CD4-positive, alpha-beta T cell (primary cell): ENCODE measurements at regions of chr16 and their contacts with region 1.

Region 1: GRCh38 chr16:49407873-49408550 is 34.4 kb downstream of the C16orf78 start:
- DNase-seq: peak; percentile 45 to 77 (median 58)
- ATAC-seq: peak; percentile 74
- H3K4me3 ChIP-seq: no peak overlapping the region
- H3K4me3 Mint-ChIP-seq: no peak overlapping the region
- H3K27ac ChIP-seq: no peak overlapping the region
- H3K27ac Mint-ChIP-seq: no peak overlapping the region
- H3K4me1 ChIP-seq: peaks cover 6% of the 10 kb centered on the region
- H3K4me1 Mint-ChIP-seq: peaks cover 4% of the 10 kb centered on the region
- H3K27me3 ChIP-seq: no peaks in the 10 kb centered on the region
- H3K27me3 Mint-ChIP-seq: peaks cover 8% of the 10 kb centered on the region
- CTCF ChIP-seq: peak; percentile 75

Region 2: GRCh38 chr16:49281843-49282642 is 126.0 kb before region 1 on chr16:
- CTCF ChIA-PET with region 1: no interaction called
- POLR2A ChIA-PET with region 1: no interaction called
- intact Hi-C with region 1: no loop called
- DNase-seq: peak in 6 of 14 experiments; percentile 4 to 44 (median 17)
- ATAC-seq: no peak
- H3K4me3 ChIP-seq: no peak overlapping the region
- H3K4me3 Mint-ChIP-seq: peak overlapping the region; percentile 48
- H3K27ac ChIP-seq: no peak overlapping the region
- H3K27ac Mint-ChIP-seq: no peak overlapping the region
- H3K4me1 ChIP-seq: peaks cover 3% of the 10 kb centered on the region
- H3K4me1 Mint-ChIP-seq: peaks cover 9% of the 10 kb centered on the region
- H3K27me3 ChIP-seq: peaks cover 54 to 79% of the 10 kb centered on the region in 2 experiments
- H3K27me3 Mint-ChIP-seq: peaks cover 79% of the 10 kb centered on the region
- CTCF ChIP-seq: no peak

Region 3: DNA sequence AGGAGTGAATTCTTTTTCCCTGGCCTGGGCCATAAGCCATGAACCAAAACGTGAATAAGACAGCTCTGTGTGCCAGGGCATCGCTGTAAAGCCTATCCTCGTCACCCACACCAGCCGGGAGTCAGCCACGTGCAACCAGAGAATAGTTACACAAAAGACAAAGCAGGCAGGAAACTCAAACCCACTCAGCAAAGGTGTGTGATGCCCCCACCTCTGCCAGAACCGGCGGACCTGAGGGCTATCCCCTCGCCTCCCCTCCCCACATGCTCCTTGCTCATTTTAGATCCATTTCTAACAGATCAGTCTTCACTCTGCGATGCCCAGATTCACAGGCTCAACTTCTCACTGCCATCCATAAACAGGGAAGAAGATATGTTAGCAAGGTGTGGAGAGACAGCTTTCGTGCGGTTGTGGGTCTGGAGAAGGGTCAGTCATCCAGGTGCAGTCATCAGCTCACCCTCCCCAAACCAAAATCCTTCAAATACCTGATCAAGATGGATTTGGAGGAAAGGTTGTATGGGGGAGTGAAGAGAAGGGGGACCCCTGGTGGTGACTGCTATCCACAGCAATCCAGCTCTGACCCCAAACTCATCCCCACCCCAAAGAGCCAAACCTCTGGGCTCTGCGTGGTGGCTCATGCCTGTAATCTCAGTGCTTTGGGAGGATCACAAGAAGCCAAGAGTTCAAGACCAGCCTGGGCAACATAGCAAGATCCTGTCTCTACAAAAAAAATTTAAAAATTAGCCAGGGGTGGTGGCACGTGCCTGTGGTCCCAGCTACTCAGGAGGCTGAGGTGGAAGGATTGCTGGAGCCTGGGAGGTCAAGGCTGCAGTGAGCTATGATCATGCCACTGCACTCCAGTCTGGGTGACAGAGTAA is 184.8 kb after region 1 on chr16:
- CTCF ChIA-PET with region 1: interaction called, 5 read pairs
- POLR2A ChIA-PET with region 1: no interaction called
- intact Hi-C with region 1: loop called (anchors 1 kb)
- DNase-seq: peak; percentile 6 to 74 (median 26)
- ATAC-seq: peak; percentile 74
- H3K4me3 ChIP-seq: no peak overlapping the region
- H3K4me3 Mint-ChIP-seq: no peak overlapping the region
- H3K27ac ChIP-seq: no peak overlapping the region
- H3K27ac Mint-ChIP-seq: no peak overlapping the region
- H3K4me1 ChIP-seq: peaks cover 7% of the 10 kb centered on the region
- H3K4me1 Mint-ChIP-seq: peaks cover 21% of the 10 kb centered on the region
- H3K27me3 ChIP-seq: peaks cover 3 to 9% of the 10 kb centered on the region in 2 experiments
- H3K27me3 Mint-ChIP-seq: peaks cover 5% of the 10 kb centered on the region
- CTCF ChIP-seq: peak; percentile 76

Region 4: GRCh38 chr16:49876716-49877129 is 468.7 kb after region 1 on chr16:
- CTCF ChIA-PET with region 1: no interaction called
- POLR2A ChIA-PET with region 1: no interaction called
- intact Hi-C with region 1: loop called in 1 of 2 experiments (anchors 5 kb)
- DNase-seq: peak in 4 of 14 experiments; percentile 11 to 40 (median 31)
- ATAC-seq: no peak
- H3K4me3 ChIP-seq: no peak overlapping the region
- H3K4me3 Mint-ChIP-seq: no peak overlapping the region
- H3K27ac ChIP-seq: no peak overlapping the region
- H3K27ac Mint-ChIP-seq: no peak overlapping the region
- H3K4me1 ChIP-seq: peaks cover 3% of the 10 kb centered on the region
- H3K4me1 Mint-ChIP-seq: no peaks in the 10 kb centered on the region
- H3K27me3 ChIP-seq: peaks cover 20 to 34% of the 10 kb centered on the region in 2 experiments
- H3K27me3 Mint-ChIP-seq: peaks cover 73% of the 10 kb centered on the region
- CTCF ChIP-seq: peak; percentile 51

Region 5: GRCh38 chr16:49921791-49922456 is 513.9 kb after region 1 on chr16:
- CTCF ChIA-PET with region 1: interaction called, 4 read pairs
- POLR2A ChIA-PET with region 1: no interaction called
- intact Hi-C with region 1: loop called in 1 of 2 experiments (anchors 1 kb)
- DNase-seq: peak; percentile 14 to 57 (median 29)
- ATAC-seq: no peak
- H3K4me3 ChIP-seq: no peak overlapping the region
- H3K4me3 Mint-ChIP-seq: no peak overlapping the region
- H3K27ac ChIP-seq: no peak overlapping the region
- H3K27ac Mint-ChIP-seq: no peak overlapping the region
- H3K4me1 ChIP-seq: no peaks in the 10 kb centered on the region
- H3K4me1 Mint-ChIP-seq: no peaks in the 10 kb centered on the region
- H3K27me3 ChIP-seq: peaks cover 0 to 2% of the 10 kb centered on the region in 2 experiments
- H3K27me3 Mint-ChIP-seq: peaks cover 20% of the 10 kb centered on the region
- CTCF ChIP-seq: peak; percentile 23